Naive thymus-derived CD4-positive, alpha-beta T cell (primary cell): ENCODE measurements at regions of chr1 and their contacts with region 1.

Region 1: DNA sequence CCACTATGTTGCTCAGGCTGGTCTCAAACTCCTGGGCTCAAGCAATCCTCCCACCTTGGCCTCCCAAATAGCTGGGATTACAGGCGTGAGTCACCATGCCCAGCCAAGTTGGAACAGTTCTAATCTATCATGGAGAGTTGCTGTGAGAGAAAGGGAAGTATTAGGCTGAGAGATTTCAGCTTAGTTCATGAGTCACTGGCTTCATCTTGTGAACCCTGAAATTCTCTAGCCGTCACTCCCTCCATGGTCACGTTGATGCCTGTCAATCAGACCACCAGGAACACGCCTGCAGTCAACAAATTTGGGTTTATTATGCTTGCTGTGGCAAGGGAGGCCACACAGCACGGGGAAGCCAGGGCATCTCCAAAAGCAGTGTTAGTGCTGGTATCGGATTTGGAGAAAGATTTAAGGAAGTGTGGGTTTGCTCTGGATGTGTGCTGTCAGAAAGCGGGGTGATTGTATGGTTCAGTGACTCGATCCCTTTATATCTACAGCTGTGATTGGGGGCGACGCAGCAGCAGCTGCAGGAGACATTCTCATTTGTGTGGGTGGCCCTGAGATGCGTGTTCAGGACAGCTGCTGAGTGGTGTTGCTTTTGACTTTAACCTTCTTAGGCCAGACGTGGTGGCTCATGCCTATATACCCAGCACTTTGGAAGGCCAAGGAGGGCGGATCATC is 18.7 kb downstream of the UQCRHL start:
- DNase-seq: no peak
- ATAC-seq: peak; percentile 70
- H3K4me3 ChIP-seq: no peak overlapping the region
- H3K4me3 Mint-ChIP-seq: no peak overlapping the region
- H3K27ac ChIP-seq: no peak overlapping the region
- H3K27ac Mint-ChIP-seq: peak overlapping the region in 1 of 9 donors; percentile 26
- H3K4me1 ChIP-seq: no peaks in the 10 kb centered on the region
- H3K4me1 Mint-ChIP-seq: peaks cover 2 to 6% (median 4%) of the 10 kb centered on the region in 7 donors
- H3K27me3 ChIP-seq: no peaks in the 10 kb centered on the region
- H3K27me3 Mint-ChIP-seq: peaks cover 0 to 14% (median 4%) of the 10 kb centered on the region in 5 donors

Region 2: DNA sequence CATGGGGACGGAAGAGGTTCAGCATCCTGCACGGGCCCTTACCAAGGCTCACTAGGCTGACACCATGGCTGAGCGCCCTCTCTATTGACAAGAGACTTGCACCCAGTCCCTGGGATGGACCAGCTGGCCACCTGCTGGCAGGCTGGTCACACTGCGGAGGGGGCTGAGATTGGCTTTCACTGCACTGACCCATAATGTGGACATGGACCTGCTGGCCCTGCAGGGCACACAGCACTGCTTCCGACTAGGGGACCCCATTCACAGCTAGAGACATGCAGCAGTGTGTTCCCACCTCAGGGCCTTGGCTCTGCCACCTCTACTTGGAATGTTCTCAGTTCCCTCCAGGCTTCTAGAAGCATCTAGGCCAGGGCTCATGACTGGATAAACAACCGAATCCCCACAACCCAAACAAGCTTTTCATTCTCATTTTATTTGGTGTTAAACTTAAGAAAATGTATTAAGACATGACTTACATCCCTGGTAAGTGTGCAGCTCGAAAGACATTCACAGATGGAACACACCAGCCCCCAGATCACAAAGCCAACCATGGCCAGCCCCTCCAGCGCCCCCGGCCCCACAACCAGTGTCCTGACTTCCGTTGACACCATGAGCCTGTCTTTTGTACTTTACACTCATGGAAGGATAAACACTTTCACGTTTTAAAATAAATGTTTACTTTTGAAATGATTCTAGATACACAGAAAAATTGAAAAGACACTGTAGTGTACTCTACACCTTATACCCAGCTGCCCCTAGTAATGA is 206.0 kb after region 1 on chr1:
- CTCF ChIA-PET with region 1: no interaction called
- POLR2A ChIA-PET with region 1: no interaction called
- intact Hi-C with region 1: loop called in 1 of 2 experiments (anchors 1 kb)
- DNase-seq: peak in 4 of 9 donors; percentile 11 to 60 (median 30)
- ATAC-seq: peak; percentile 79
- H3K4me3 ChIP-seq: no peak overlapping the region
- H3K4me3 Mint-ChIP-seq: no peak overlapping the region
- H3K27ac ChIP-seq: no peak overlapping the region
- H3K27ac Mint-ChIP-seq: peak overlapping the region in 1 of 9 donors; percentile 9
- H3K4me1 ChIP-seq: no peaks in the 10 kb centered on the region
- H3K4me1 Mint-ChIP-seq: no peaks in the 10 kb centered on the region
- H3K27me3 ChIP-seq: no peaks in the 10 kb centered on the region
- H3K27me3 Mint-ChIP-seq: peaks cover 0 to 3% (median 0%) of the 10 kb centered on the region in 5 donors

Region 3: DNA sequence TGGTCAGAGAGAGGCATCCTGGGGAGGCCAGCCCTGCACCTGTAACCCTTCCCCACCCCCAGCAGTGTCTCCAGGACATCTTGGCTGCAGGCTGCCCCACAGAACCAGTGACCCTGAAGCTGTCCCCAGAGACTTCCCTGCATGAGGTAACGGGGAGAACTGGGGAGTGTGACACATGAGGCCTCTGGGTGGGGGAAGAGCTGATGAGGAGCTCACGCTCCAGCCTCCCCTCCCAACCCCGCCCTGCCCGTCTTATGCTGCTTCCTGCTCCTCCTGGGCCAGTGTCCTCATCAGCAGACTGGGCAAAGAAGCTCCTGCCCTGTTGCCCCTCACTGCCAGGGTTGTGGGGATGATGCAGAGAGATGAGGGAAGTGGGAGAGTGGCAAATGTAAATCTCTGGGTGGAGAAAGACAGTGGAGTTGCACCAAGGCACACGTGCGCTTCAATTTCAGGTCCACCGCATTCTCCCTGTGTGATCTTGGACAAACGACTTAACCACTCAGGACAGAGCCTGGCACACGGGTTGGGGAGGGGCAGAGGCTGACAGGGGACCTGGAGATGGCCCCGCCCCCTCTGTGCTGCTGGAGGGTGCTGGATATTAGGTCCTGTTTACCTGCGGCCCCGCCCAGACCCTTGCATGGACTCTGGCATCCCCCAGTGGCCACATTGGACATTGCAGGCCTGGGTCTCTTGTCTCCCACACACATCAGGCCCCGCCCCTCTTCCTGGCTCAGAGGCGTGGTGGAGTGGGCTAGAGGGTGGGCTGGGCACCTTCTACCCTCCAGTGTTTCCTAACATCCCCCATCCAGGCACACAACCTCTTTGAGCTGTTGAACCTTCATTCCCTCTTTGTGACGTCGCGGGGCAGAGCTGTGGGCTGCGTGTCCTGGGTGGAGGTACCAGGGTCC is 267.1 kb after region 1 on chr1:
- CTCF ChIA-PET with region 1: interaction called, 8 read pairs
- POLR2A ChIA-PET with region 1: no interaction called
- intact Hi-C with region 1: loop called (anchors 1 kb)
- DNase-seq: peak; percentile 71 to 87 (median 78)
- ATAC-seq: peak; percentile 97
- H3K4me3 ChIP-seq: no peak overlapping the region
- H3K4me3 Mint-ChIP-seq: peak overlapping the region in 2 of 10 donors; percentile 17 to 43
- H3K27ac ChIP-seq: no peak overlapping the region
- H3K27ac Mint-ChIP-seq: peak overlapping the region in 4 of 9 donors; percentile 45 to 76 (median 68)
- H3K4me1 ChIP-seq: no peaks in the 10 kb centered on the region
- H3K4me1 Mint-ChIP-seq: peaks cover 5 to 6% (median 6%) of the 10 kb centered on the region in 7 donors
- H3K27me3 ChIP-seq: no peaks in the 10 kb centered on the region
- H3K27me3 Mint-ChIP-seq: peaks cover 0 to 4% (median 0%) of the 10 kb centered on the region in 5 donors

Region 4: GRCh38 chr1:16266411-16267118 is 477.8 kb after region 1 on chr1:
- CTCF ChIA-PET with region 1: no interaction called
- POLR2A ChIA-PET with region 1: no interaction called
- intact Hi-C with region 1: no loop called
- DNase-seq: no peak
- ATAC-seq: no peak
- H3K4me3 ChIP-seq: no peak overlapping the region
- H3K4me3 Mint-ChIP-seq: no peak overlapping the region
- H3K27ac ChIP-seq: no peak overlapping the region
- H3K27ac Mint-ChIP-seq: peak overlapping the region in 5 of 9 donors; percentile 7 to 78 (median 32)
- H3K4me1 ChIP-seq: no peaks in the 10 kb centered on the region
- H3K4me1 Mint-ChIP-seq: peaks cover 6 to 43% (median 32%) of the 10 kb centered on the region in 7 donors
- H3K27me3 ChIP-seq: no peaks in the 10 kb centered on the region
- H3K27me3 Mint-ChIP-seq: no peaks in the 10 kb centered on the region